ENCODE measurements at regions of chrX and their contacts with region 1.

Region 1: DNA sequence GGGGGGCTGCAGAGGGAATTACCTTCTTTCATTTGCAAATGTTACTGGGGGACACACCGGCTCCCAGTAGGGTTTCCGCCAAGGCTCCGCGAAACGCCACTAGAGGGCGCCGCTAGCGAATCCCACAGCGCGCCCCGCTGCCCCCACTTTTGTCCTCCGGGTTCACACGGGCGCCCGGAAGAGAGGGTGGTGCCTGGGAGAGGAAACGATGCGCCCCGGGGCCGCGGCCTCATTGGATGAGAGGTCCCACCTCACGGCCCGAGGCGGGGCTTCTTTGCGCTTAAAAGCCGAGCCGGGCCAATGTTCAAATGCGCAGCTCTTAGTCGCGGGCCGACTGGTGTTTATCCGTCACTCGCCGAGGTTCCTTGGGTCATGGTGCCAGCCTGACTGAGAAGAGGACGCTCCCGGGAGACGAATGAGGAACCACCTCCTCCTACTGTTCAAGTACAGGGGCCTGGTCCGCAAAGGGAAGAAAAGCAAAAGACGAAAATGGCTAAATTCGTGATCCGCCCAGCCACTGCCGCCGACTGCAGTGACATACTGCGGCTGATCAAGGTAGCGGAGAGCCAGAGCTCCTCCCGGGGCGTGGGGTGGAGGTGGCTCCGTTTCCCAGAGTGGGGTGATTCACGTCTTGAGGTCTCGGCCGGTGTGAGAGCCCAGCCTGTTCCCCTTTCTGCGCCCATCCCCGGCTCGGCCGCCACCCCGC is at the start of gene SAT1:
- DNase-seq: peak; percentile 97
- H3K4me3 ChIP-seq: peak within 1 kb of the TSS; percentile 65
- H3K27ac ChIP-seq: peak within 1 kb of the TSS; percentile 81
- H3K4me1 ChIP-seq: no peaks in the 10 kb centered on the region
- H3K27me3 ChIP-seq: no peaks in the 10 kb centered on the region
- CTCF ChIP-seq: peak; percentile 85
- total RNA-seq, gene SAT1: 21.6 and 27.4 TPM in 2 replicates

Region 2: DNA sequence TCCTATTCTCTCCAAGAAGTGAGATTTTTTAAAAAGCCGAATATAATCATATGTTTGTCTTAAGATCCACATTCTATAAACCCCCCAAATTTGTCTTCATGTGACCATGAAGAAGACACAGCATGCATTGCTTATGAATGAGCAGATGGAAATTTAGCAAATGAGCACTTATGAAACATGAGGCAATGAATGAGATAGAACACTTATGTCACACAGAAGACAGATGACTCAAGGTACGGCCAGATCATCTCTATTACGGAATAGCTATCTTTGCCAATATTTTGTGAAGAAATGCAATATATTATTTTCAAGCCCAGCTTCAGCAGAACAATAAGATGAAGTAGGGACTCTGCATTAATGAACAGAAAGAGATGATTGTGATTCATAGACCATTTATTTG is 1729.5 kb before region 1 on chrX:
- CTCF ChIA-PET with region 1: no interaction called
- POLR2A ChIA-PET with region 1: no interaction called
- intact Hi-C with region 1: no loop called
- DNase-seq: no peak
- H3K4me3 ChIP-seq: no peak overlapping the region
- H3K27ac ChIP-seq: no peak overlapping the region
- H3K4me1 ChIP-seq: no peaks in the 10 kb centered on the region
- H3K27me3 ChIP-seq: no peaks in the 10 kb centered on the region
- CTCF ChIP-seq: no peak

Region 3: DNA sequence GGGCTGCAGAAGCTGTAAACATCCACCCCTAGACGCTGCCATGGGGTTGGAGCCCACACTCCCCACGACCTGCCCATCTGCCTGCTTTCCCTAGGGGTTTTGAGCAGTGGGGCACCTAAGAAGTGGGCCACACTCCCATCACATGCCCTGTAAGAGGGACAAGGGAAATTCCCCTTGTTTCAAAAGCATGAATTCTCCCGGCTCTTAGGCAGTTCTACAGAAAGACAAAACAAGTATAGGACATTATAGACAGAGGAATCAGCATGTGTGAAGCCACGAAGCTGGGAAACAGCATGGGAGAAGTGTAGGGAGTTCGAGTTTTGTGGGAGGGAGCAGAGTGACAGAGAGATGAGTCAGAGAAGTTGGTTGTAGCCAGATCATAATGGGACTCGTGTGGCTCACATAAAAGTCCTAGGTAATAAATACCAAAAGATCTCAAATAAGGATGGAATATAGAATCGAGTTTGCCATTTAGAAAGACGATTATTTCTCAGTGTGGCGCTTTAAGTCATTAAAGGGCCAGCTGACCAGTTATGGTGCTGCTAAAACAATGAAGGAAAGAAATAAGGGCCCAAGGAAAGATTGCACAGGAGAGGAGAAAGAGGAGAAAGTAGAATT is 100.8 kb after region 1 on chrX:
- CTCF ChIA-PET with region 1: no interaction called
- POLR2A ChIA-PET with region 1: no interaction called
- intact Hi-C with region 1: loop called (anchors 1 kb)
- DNase-seq: peak; percentile 68
- H3K4me3 ChIP-seq: no peak overlapping the region
- H3K27ac ChIP-seq: peak overlapping the region; percentile 58
- H3K4me1 ChIP-seq: peaks cover 20% of the 10 kb centered on the region
- H3K27me3 ChIP-seq: no peaks in the 10 kb centered on the region
- CTCF ChIP-seq: no peak